Endothelial cell of umbilical vein (primary cell): ENCODE measurements at regions of chr5 and their contacts with region 1.

Region 1: DNA sequence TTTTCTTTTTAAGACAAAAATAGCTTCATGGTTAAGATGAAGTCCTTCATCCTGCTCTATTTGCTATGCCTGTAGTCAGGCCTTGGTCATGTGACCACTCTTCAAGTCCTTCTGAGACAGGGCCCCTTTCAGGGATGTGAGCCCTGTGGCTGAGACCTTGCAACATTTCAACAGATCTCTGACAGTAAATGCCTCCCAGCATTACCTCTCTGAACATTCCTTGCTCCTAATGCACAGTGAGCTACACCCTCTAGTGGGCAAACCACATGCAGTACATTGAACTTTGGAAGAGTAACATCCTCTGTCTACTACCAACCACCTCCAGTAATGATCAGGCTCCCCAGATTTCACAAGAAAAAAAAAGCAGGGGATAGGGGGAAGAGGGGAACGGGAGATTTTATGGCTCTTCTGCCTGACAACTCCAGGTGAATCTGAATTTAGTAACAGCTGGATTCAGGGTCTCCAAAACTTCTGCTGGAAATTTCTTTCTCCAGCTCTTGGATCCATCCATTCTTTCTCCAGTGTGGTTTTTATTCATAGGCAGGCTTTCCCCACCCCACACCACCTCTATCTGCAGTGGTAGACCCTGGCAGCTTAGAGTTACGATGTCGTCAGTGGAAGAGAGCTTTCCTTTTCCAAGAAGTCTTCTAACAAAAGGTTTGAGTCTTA is 8.9 kb upstream of the FBXO38 start:
- DNase-seq: peak; percentile 66
- H3K4me3 ChIP-seq: no peak overlapping the region
- H3K27ac ChIP-seq: no peak overlapping the region
- H3K4me1 ChIP-seq: peaks cover 16% of the 10 kb centered on the region
- H3K27me3 ChIP-seq: no peaks in the 10 kb centered on the region
- CTCF ChIP-seq: peak; percentile 77 to 78
- POLR2A ChIP-seq: no peak

Region 2: DNA sequence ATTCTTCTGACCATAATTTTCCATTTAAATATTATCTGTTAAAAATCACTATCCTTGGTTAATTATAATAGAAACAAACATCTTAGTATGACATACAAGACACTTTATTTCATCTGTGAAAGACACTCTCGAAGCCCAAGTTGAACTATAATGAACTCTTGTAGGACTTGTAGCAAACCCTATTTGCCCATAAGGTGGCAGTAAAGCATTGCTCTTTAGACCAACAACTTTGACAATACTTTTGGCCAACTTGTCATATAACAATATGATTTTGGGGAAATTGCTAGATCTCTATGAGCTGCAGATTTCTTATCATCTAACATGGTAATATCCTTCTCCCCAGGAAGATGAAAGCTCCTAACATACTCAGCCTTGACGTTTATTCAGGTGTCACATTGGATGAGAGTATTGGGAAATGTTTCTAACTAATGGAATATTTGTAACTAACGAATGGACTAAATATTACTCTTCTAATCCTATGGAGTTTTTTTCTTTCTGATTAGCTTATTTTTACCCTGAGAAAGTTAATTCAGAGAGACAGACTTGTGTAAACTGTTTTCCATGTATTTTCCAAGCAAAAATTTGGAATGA is 195.5 kb before region 1 on chr5:
- CTCF ChIA-PET with region 1: interaction called, 43 read pairs
- POLR2A ChIA-PET with region 1: no interaction called
- dilution Hi-C with region 1: no loop called
- intact Hi-C with region 1: loop called (anchors 1 kb)
- DNase-seq: peak; percentile 78
- H3K4me3 ChIP-seq: no peak overlapping the region
- H3K27ac ChIP-seq: no peak overlapping the region
- H3K4me1 ChIP-seq: no peaks in the 10 kb centered on the region
- H3K27me3 ChIP-seq: no peaks in the 10 kb centered on the region
- CTCF ChIP-seq: peak; percentile 53 to 56
- POLR2A ChIP-seq: no peak

Region 3: GRCh38 chr5:148290271-148291195 is 84.3 kb before region 1 on chr5:
- CTCF ChIA-PET with region 1: interaction called, 52 read pairs
- POLR2A ChIA-PET with region 1: no interaction called
- dilution Hi-C with region 1: no loop called
- intact Hi-C with region 1: loop called (anchors 1 kb)
- DNase-seq: peak; percentile 36
- H3K4me3 ChIP-seq: no peak overlapping the region
- H3K27ac ChIP-seq: no peak overlapping the region
- H3K4me1 ChIP-seq: no peaks in the 10 kb centered on the region
- H3K27me3 ChIP-seq: no peaks in the 10 kb centered on the region
- CTCF ChIP-seq: peak; percentile 24 to 42
- POLR2A ChIP-seq: no peak

Region 4: DNA sequence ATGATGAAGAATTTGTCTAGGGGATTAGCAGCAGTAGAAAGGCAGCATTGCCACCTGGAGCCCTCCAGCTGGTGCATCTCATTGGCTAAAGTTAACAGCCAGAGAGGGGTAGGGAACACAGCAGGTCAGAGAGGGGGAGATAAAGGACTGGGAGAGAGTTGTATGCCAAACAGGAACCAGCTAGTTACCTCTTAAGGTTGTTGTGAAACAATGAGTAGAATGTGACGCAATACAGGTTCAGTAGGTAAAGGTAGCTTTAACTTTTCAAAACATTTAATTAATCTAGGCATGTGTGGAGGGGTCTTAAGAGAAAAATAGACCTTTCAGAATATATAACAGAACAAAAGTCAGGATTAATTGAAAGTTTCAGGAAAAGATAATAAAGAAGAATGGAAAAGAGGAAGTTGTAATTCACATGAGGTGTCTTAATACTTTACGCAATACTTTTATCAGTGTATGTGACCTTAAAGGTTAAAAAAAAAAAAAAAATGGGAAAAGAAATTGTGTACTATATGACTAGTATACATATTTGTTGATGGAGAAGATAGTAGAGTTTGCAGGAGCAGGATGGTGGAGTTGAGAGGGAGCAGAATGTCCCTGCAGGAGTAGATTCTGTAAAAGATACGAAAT is 23.3 kb after region 1 on chr5:
- CTCF ChIA-PET with region 1: interaction called, 13 read pairs
- POLR2A ChIA-PET with region 1: no interaction called
- dilution Hi-C with region 1: no loop called
- intact Hi-C with region 1: loop called (anchors 1 kb)
- DNase-seq: no peak
- H3K4me3 ChIP-seq: no peak overlapping the region
- H3K27ac ChIP-seq: peak overlapping the region; percentile 55
- H3K4me1 ChIP-seq: peaks cover 45% of the 10 kb centered on the region
- H3K27me3 ChIP-seq: no peaks in the 10 kb centered on the region
- CTCF ChIP-seq: no peak
- POLR2A ChIP-seq: no peak